ENCODE measurements at regions of chr17 and their contacts with region 1.

Region 1: DNA sequence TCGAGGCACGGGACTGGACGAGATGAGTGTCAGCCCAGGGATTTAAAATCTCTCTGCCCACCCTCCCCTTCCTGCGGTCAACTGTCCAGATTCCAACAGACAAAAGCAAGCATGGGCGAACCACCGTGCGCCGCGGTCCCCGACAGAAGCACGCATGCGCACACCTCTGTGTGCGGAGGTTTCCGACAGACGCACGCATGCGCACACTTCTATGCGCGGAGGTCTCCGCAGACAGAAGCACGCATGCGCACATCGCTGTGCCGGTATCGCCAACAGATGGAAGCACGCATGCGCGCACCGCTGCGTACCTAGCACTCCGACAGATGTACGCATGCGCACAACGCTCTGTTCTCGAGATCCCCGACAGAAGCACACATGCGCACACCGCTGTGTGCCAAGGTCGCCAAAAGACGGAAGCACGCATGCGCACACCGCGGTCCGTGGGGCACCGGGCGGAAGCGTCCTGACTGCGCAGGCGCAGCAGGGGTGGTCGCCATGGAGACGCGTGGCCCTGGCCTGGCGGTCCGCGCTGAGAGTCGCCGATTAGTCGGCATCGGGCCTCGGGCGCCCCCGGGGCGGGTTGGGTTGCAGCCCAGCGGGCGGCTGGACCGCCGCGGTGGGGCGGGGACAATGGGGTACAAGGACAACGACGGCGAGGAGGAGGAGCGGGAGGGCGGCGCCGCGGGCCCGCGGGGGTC is 57.4 kb upstream of the RPH3AL start:
- DNase-seq: peak; percentile 100
- ATAC-seq: peak; percentile 81 to 93
- H3K4me3 ChIP-seq: peak overlapping the region; percentile 70
- H3K27ac ChIP-seq: peak overlapping the region; percentile 76 to 90
- H3K4me1 ChIP-seq: peaks cover 21% of the 10 kb centered on the region
- CTCF ChIP-seq: no peak
- EP300 ChIP-seq: no peak
- POLR2A ChIP-seq: peak; percentile 95
- RAD21 ChIP-seq: no peak

Region 2: GRCh38 chr17:247767-248166 is 162.2 kb before region 1 on chr17:
- CTCF ChIA-PET with region 1: no interaction called
- POLR2A ChIA-PET with region 1: no interaction called
- DNase-seq: no peak
- ATAC-seq: peak in 1 of 2 experiments; percentile 15; a peak in 3 of 6 replicates
- H3K4me3 ChIP-seq: no peak overlapping the region
- H3K27ac ChIP-seq: 0 out of 6 replicates have a peak overlapping the region, but pooled peaks of 1 of the 2 experiments have one; percentile 13
- H3K4me1 ChIP-seq: no peaks in the 10 kb centered on the region
- CTCF ChIP-seq: no peak
- EP300 ChIP-seq: no peak
- POLR2A ChIP-seq: no peak
- RAD21 ChIP-seq: no peak

Region 3: GRCh38 chr17:350706-351448 is 59.1 kb before region 1 on chr17:
- CTCF ChIA-PET with region 1: no interaction called
- POLR2A ChIA-PET with region 1: no interaction called
- DNase-seq: peak; percentile 86 to 96
- ATAC-seq: peak; percentile 49 to 68; a peak in 5 of 6 replicates
- H3K4me3 ChIP-seq: peak overlapping the region; percentile 48
- H3K27ac ChIP-seq: peak overlapping the region; percentile 97 to 98
- H3K4me1 ChIP-seq: peaks cover 72% of the 10 kb centered on the region
- CTCF ChIP-seq: no peak
- EP300 ChIP-seq: no peak
- POLR2A ChIP-seq: 0 out of 2 replicates have a peak, but pooled peaks have one; percentile 25
- RAD21 ChIP-seq: no peak; a peak in 1 of 5 replicates

Region 4: DNA sequence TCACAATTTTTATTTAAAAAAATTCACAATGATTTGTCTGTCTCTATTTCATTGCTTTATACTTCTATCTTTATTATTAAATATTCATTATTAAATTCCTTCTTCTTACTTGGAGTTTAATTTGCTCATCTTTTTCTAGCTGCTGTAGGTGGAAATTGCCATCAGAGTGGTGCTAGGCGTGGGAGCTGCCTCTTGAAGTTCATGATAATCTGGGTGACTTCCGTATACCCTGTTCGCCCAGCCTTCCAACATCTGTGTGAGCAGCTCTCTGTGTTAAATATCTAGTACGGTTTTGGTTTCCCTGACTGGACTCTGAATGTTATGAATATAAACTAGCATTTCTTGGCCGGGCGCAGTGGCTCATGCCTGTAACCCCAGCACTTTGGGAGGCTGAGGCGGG is 26.6 kb after region 1 on chr17:
- CTCF ChIA-PET with region 1: interaction called, 15 read pairs
- POLR2A ChIA-PET with region 1: no interaction called
- DNase-seq: no peak
- ATAC-seq: no peak
- H3K4me3 ChIP-seq: no peak overlapping the region
- H3K27ac ChIP-seq: no peak overlapping the region
- H3K4me1 ChIP-seq: no peaks in the 10 kb centered on the region
- CTCF ChIP-seq: no peak
- EP300 ChIP-seq: no peak
- POLR2A ChIP-seq: no peak
- RAD21 ChIP-seq: no peak

Region 5: GRCh38 chr17:497241-498034 is 87.4 kb after region 1 on chr17:
- CTCF ChIA-PET with region 1: interaction called, 10 read pairs
- POLR2A ChIA-PET with region 1: no interaction called
- DNase-seq: no peak
- ATAC-seq: peak in 1 of 2 experiments; percentile 21; a peak in 2 of 6 replicates
- H3K4me3 ChIP-seq: no peak overlapping the region
- H3K27ac ChIP-seq: no peak overlapping the region
- H3K4me1 ChIP-seq: peaks cover 8% of the 10 kb centered on the region; the same call in 2 of the 3 replicates
- CTCF ChIP-seq: no peak
- EP300 ChIP-seq: no peak
- POLR2A ChIP-seq: no peak
- RAD21 ChIP-seq: no peak

Region 6: DNA sequence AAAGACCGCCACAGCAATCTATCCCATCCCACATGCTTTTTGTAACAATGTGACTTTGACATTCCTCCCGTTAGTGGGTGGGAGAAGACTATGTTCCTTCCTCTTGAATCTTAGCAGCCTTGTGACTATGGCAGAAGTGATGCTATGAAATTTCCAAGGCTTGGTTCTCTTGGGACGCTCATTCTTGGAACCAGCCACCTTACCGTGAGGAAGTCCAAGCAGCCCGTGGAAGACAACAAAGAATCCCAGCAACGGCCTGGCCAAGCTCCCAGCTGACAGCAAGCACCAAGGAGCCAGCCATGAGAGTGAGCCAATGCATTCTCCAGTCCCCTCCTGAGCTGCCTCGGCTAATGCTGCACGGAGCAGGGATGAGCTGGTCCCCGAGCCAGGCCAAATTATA is 242.3 kb after region 1 on chr17:
- CTCF ChIA-PET with region 1: interaction called, 11 read pairs
- POLR2A ChIA-PET with region 1: no interaction called
- DNase-seq: no peak
- ATAC-seq: no peak
- H3K4me3 ChIP-seq: no peak overlapping the region
- H3K27ac ChIP-seq: no peak overlapping the region
- H3K4me1 ChIP-seq: no peaks in the 10 kb centered on the region
- CTCF ChIP-seq: no peak
- EP300 ChIP-seq: no peak
- POLR2A ChIP-seq: no peak
- RAD21 ChIP-seq: no peak

Region 7: GRCh38 chr17:688100-688989 is 278.3 kb after region 1 on chr17:
- CTCF ChIA-PET with region 1: interaction called, 410 read pairs
- POLR2A ChIA-PET with region 1: no interaction called
- DNase-seq: peak in 1 of 2 experiments; percentile 67
- ATAC-seq: peak in 1 of 2 experiments; percentile 34; a peak in 2 of 6 replicates
- H3K4me3 ChIP-seq: no peak overlapping the region
- H3K27ac ChIP-seq: no peak overlapping the region
- H3K4me1 ChIP-seq: peaks cover 38% of the 10 kb centered on the region
- CTCF ChIP-seq: peak; percentile 21; the same call in 2 of the 3 replicates
- EP300 ChIP-seq: no peak
- POLR2A ChIP-seq: no peak
- RAD21 ChIP-seq: peak in 1 of 2 experiments; percentile 41; a peak in 3 of 5 replicates

Region 8: DNA sequence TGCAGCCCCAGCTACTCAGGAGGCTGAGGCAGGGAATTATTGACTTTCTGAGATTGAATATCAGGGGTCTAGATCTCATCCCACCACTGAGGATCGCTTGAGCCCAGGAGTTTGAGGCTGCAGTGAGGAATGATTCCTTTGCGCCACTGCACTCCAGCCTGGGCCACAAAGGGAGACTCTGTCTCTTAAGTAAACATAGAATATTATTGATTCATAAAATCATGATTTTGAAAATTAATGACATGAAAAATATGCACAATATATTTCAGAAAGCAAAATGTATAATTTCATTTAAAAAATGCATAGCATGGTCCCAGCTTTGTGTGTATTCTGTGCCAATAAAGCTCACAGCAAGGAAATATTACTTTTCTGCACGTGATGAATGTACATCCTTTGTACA is 306.2 kb after region 1 on chr17:
- CTCF ChIA-PET with region 1: interaction called, 14 read pairs
- POLR2A ChIA-PET with region 1: interaction called, 3 read pairs
- DNase-seq: no peak
- ATAC-seq: no peak
- H3K4me3 ChIP-seq: peak overlapping the region; percentile 70
- H3K27ac ChIP-seq: peak overlapping the region; percentile 79 to 91
- H3K4me1 ChIP-seq: peaks cover 25% of the 10 kb centered on the region
- CTCF ChIP-seq: no peak
- EP300 ChIP-seq: no peak
- POLR2A ChIP-seq: no peak
- RAD21 ChIP-seq: no peak

Region 9: GRCh38 chr17:996554-997344 is 586.8 kb after region 1 on chr17 and contains the start of gene TIMM22:
- CTCF ChIA-PET with region 1: interaction called, 20 read pairs
- POLR2A ChIA-PET with region 1: interaction called, 5 read pairs
- DNase-seq: peak; percentile 98 to 100
- ATAC-seq: peak; percentile 97 to 98
- H3K4me3 ChIP-seq: peak within 1 kb of the TSS; percentile 88
- H3K27ac ChIP-seq: peak within 1 kb of the TSS; percentile 84 to 93
- H3K4me1 ChIP-seq: peaks cover 24% of the 10 kb centered on the region
- CTCF ChIP-seq: peak; percentile 97
- EP300 ChIP-seq: no peak
- POLR2A ChIP-seq: peak; percentile 92
- RAD21 ChIP-seq: peak; percentile 95 to 97
- polyA plus RNA-seq, gene TIMM22: 14.7 and 15.8 TPM in 2 replicates

Measured in A549 (cell line).